PC-9 (cell line): ENCODE measurements at regions of chr12 and their contacts with region 1.

Region 1: GRCh38 chr12:12334367-12335040 is 15.5 kb downstream of the MANSC1 start:
- DNase-seq: peak in 1 of 2 experiments; percentile 57
- H3K4me3 ChIP-seq: no peak overlapping the region
- H3K27ac ChIP-seq: no peak overlapping the region
- H3K4me1 ChIP-seq: peaks cover 44% of the 10 kb centered on the region
- H3K27me3 ChIP-seq: no peaks in the 10 kb centered on the region
- CTCF ChIP-seq: peak; percentile 89

Region 2: GRCh38 chr12:11427341-11427740 is 907.2 kb before region 1 on chr12:
- CTCF ChIA-PET with region 1: no interaction called
- POLR2A ChIA-PET with region 1: no interaction called
- intact Hi-C with region 1: no loop called
- DNase-seq: no peak
- H3K4me3 ChIP-seq: no peak overlapping the region
- H3K27ac ChIP-seq: no peak overlapping the region
- H3K4me1 ChIP-seq: no peaks in the 10 kb centered on the region
- H3K27me3 ChIP-seq: peaks cover 55% of the 10 kb centered on the region
- CTCF ChIP-seq: no peak

Region 3: GRCh38 chr12:11500178-11500860 is 834.2 kb before region 1 on chr12:
- CTCF ChIA-PET with region 1: no interaction called
- POLR2A ChIA-PET with region 1: no interaction called
- intact Hi-C with region 1: loop called (anchors 10 kb)
- DNase-seq: peak in 1 of 2 experiments; percentile 90
- H3K4me3 ChIP-seq: no peak overlapping the region
- H3K27ac ChIP-seq: no peak overlapping the region
- H3K4me1 ChIP-seq: no peaks in the 10 kb centered on the region
- H3K27me3 ChIP-seq: no peaks in the 10 kb centered on the region
- CTCF ChIP-seq: no peak

Region 4: GRCh38 chr12:11730299-11731041 is 604.0 kb before region 1 on chr12:
- CTCF ChIA-PET with region 1: no interaction called
- POLR2A ChIA-PET with region 1: no interaction called
- intact Hi-C with region 1: loop called (anchors 10 kb)
- DNase-seq: peak; percentile 83 to 96
- H3K4me3 ChIP-seq: peak overlapping the region; percentile 8; the same call in 1 of the 2 replicates
- H3K27ac ChIP-seq: peak overlapping the region; percentile 87
- H3K4me1 ChIP-seq: peaks cover 44% of the 10 kb centered on the region
- H3K27me3 ChIP-seq: no peaks in the 10 kb centered on the region
- CTCF ChIP-seq: no peak

Region 5: GRCh38 chr12:12266873-12267741 is 67.4 kb before region 1 on chr12 and contains the start of gene LRP6:
- CTCF ChIA-PET with region 1: interaction called, 11 read pairs
- POLR2A ChIA-PET with region 1: interaction called, 14 read pairs
- intact Hi-C with region 1: loop called (anchors 2 kb)
- DNase-seq: peak; percentile 74 to 95
- H3K4me3 ChIP-seq: peak within 1 kb of the TSS; percentile 77
- H3K27ac ChIP-seq: peak within 1 kb of the TSS; percentile 85
- H3K4me1 ChIP-seq: peaks cover 23% of the 10 kb centered on the region
- H3K27me3 ChIP-seq: no peaks in the 10 kb centered on the region
- CTCF ChIP-seq: no peak
- total RNA-seq, gene LRP6: 45.5 and 60.0 TPM in 2 replicates

Region 6: DNA sequence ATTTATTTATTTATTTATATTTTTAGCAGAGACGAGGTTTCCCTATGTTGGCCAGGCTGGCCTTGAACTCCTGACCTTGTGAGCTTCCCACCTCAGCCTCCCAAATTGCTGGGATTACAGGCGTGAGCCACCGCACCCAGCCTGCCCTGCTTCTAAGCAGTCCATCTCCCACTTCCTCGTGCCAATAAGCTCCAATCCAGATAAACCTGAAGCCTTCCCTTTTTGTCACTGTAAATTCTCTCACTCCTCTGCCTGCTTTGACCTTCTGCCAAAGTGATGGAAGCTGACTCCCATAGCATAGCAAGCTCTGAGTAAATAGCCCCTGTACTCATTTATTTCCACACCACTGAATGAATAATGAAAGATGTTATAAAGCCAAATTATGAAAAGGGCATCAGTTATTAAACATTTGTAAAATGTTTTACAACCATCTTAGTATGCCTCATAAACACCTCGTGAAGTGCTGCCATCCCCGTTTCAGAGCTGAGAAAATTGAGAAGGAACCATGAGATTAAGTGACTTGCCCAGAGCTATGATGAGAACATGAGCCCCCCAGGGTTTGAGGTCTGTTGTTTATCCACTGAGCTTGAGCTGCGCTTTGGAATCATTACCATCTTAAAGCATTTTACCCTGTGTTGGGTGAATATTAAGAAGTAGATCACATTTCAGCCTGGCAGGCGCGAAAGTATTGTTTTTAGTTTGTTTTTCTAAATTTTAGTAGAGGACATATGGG is 14.9 kb before region 1 on chr12:
- CTCF ChIA-PET with region 1: no interaction called
- POLR2A ChIA-PET with region 1: no interaction called
- intact Hi-C with region 1: no loop called
- DNase-seq: no peak
- H3K4me3 ChIP-seq: no peak overlapping the region
- H3K27ac ChIP-seq: no peak overlapping the region
- H3K4me1 ChIP-seq: no peaks in the 10 kb centered on the region
- H3K27me3 ChIP-seq: no peaks in the 10 kb centered on the region
- CTCF ChIP-seq: no peak

Region 7: DNA sequence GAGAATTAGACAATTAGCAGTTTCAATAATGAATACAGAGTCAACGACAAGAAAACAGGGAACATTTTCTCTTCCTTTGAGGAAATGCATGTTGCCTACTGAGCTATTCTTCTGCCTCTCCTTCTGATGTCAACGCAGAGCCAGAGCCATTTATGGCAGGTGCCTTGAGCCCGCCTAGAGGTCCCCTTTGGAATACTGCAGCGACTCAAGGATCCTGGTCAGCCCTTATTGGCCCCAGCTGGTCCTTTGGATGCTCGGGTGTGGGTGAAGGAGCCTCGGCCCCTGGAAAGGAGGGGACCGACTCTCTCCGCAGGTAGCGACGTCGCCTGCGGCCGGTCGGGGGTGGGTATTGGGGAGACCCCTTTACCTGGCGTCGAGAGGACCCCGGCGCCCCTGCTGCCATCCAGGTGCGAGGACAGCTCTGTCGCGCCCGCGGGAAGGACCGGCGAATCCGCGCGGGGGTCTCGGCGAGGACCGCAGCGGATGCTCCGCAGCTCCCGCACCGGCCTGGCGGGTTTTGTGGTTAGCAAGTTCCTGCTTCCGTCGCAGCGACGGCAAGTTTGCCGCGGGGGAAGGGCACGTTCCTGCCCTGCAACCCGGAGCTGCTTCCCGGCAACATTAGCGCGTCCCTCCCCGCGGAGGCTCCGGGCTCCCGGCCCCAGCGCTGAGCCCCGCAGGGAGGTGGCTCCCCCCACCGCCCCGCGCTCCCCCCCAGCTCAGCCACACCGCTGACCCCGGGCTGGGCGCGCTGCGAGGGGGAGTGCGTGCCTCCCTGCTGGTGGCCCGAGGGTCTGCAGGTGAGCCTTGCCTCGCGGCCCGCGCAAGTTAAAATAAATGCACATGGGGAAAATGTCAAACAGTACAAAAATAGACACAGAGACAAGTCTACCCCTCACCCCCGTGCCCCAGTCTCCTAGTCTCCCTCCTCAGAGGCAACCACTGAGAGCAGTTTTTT is 15.5 kb after region 1 on chr12 and contains the start of gene MANSC1:
- CTCF ChIA-PET with region 1: interaction called, 6 read pairs
- POLR2A ChIA-PET with region 1: interaction called, 10 read pairs
- intact Hi-C with region 1: loop called (anchors 2 kb)
- DNase-seq: peak; percentile 60 to 71
- H3K4me3 ChIP-seq: peak within 1 kb of the TSS; percentile 85
- H3K27ac ChIP-seq: peak within 1 kb of the TSS; percentile 92
- H3K4me1 ChIP-seq: peaks cover 37% of the 10 kb centered on the region
- H3K27me3 ChIP-seq: no peaks in the 10 kb centered on the region
- CTCF ChIP-seq: peak; percentile 45; the same call in 1 of the 2 replicates
- total RNA-seq, gene MANSC1: 25.5 and 32.0 TPM in 2 replicates

Region 8: GRCh38 chr12:12786716-12787601 is 452.5 kb after region 1 on chr12:
- CTCF ChIA-PET with region 1: no interaction called
- POLR2A ChIA-PET with region 1: no interaction called
- intact Hi-C with region 1: no loop called
- DNase-seq: peak; percentile 57 to 83
- H3K4me3 ChIP-seq: peak overlapping the region; percentile 61; the same call in 1 of the 2 replicates
- H3K27ac ChIP-seq: peak overlapping the region; percentile 76
- H3K4me1 ChIP-seq: peaks cover 44% of the 10 kb centered on the region
- H3K27me3 ChIP-seq: no peaks in the 10 kb centered on the region
- CTCF ChIP-seq: no peak

Region 9: DNA sequence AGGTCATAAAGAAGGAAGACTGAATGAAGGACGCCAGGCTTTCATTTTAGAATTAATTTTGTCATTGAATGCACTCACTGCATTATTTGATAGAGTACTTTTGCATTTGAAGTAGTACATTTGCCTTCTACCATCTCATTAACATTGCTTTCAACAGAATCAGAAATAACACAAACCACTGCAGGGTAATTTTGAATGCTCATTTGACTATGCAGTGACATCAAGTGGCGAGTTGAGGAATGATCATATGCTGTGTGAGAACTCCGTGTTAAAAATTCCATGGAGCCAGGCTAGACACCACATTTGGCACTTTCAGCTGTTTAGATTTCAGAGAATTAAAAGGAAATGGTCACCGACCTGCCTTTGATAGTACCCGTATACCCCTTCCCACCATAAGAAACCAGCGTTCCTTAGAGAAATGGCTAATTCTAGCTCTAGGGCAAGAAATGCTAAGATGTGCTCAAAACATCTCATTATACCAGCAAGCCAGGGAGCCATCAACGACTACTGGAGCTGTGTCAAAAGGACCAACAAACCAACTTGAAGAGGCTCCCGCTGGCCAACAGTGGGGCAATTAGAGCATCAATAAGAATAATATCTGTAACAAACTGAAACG is 649.0 kb after region 1 on chr12:
- CTCF ChIA-PET with region 1: interaction called, 11 read pairs
- POLR2A ChIA-PET with region 1: no interaction called
- intact Hi-C with region 1: no loop called
- DNase-seq: peak; percentile 40 to 41
- H3K4me3 ChIP-seq: no peak overlapping the region
- H3K27ac ChIP-seq: no peak overlapping the region
- H3K4me1 ChIP-seq: peaks cover 21% of the 10 kb centered on the region
- H3K27me3 ChIP-seq: no peaks in the 10 kb centered on the region
- CTCF ChIP-seq: peak; percentile 77